Endothelial cell of umbilical vein (primary cell): ENCODE measurements at regions of chr2 and their contacts with region 1.

Region 1: DNA sequence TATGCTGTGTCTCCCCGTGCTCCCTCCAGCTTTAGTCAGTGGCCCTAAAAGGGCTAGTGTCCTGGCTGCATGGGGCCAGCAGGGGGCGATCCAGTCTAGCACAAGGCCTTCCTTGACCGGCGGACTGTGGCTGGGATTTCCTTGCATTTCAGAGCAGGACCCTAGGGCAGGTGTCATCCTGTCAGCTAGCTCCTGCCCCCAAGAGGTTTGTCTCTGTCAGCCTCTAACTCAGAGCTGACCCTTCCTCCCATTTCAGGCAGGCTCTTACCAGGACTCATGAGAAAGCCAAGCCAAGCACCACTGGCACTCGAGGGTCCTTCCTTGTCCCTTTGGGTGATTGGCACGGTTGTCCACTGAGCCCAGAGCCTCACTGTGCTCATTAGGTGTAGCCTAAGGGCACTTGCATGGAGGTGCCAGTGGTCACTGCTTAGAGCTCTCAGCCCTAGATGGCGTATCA is 140.3 kb downstream of the RPIA start:
- DNase-seq: peak; percentile 23
- H3K4me3 ChIP-seq: no peak overlapping the region
- H3K27ac ChIP-seq: no peak overlapping the region
- H3K4me1 ChIP-seq: peaks cover 22% of the 10 kb centered on the region
- H3K27me3 ChIP-seq: no peaks in the 10 kb centered on the region
- CTCF ChIP-seq: peak; percentile 56 to 78
- POLR2A ChIP-seq: no peak

Region 2: GRCh38 chr2:88144914-88145497 is 686.8 kb before region 1 on chr2:
- CTCF ChIA-PET with region 1: no interaction called
- POLR2A ChIA-PET with region 1: no interaction called
- dilution Hi-C with region 1: no loop called
- intact Hi-C with region 1: no loop called
- DNase-seq: no peak
- H3K4me3 ChIP-seq: no peak overlapping the region
- H3K27ac ChIP-seq: no peak overlapping the region
- H3K4me1 ChIP-seq: no peaks in the 10 kb centered on the region
- H3K27me3 ChIP-seq: no peaks in the 10 kb centered on the region
- CTCF ChIP-seq: no peak
- POLR2A ChIP-seq: no peak

Region 3: GRCh38 chr2:88691339-88692183 is 140.3 kb before region 1 on chr2 and contains the start of gene RPIA:
- CTCF ChIA-PET with region 1: no interaction called
- POLR2A ChIA-PET with region 1: no interaction called
- dilution Hi-C with region 1: no loop called
- intact Hi-C with region 1: loop called (anchors 5 kb)
- DNase-seq: peak; percentile 99
- H3K4me3 ChIP-seq: peak within 1 kb of the TSS; percentile 44 to 83 (median 73)
- H3K27ac ChIP-seq: peak within 1 kb of the TSS; percentile 59
- H3K4me1 ChIP-seq: peaks cover 13% of the 10 kb centered on the region
- H3K27me3 ChIP-seq: no peaks in the 10 kb centered on the region
- CTCF ChIP-seq: peak; percentile 71 to 76
- POLR2A ChIP-seq: peak; percentile 61
- total RNA-seq, gene RPIA: 29.8 and 30.3 TPM in 2 replicates

Region 4: GRCh38 chr2:88709181-88709641 is 122.6 kb before region 1 on chr2:
- CTCF ChIA-PET with region 1: no interaction called
- POLR2A ChIA-PET with region 1: no interaction called
- dilution Hi-C with region 1: no loop called
- intact Hi-C with region 1: no loop called
- DNase-seq: peak; percentile 65
- H3K4me3 ChIP-seq: no peak overlapping the region
- H3K27ac ChIP-seq: no peak overlapping the region
- H3K4me1 ChIP-seq: peaks cover 7% of the 10 kb centered on the region
- H3K27me3 ChIP-seq: no peaks in the 10 kb centered on the region
- CTCF ChIP-seq: no peak
- POLR2A ChIP-seq: no peak

Region 5: GRCh38 chr2:88753833-88754584 is 77.8 kb before region 1 on chr2:
- CTCF ChIA-PET with region 1: no interaction called
- POLR2A ChIA-PET with region 1: no interaction called
- dilution Hi-C with region 1: no loop called
- intact Hi-C with region 1: no loop called
- DNase-seq: peak; percentile 22
- H3K4me3 ChIP-seq: no peak overlapping the region
- H3K27ac ChIP-seq: no peak overlapping the region
- H3K4me1 ChIP-seq: no peaks in the 10 kb centered on the region
- H3K27me3 ChIP-seq: no peaks in the 10 kb centered on the region
- CTCF ChIP-seq: no peak
- POLR2A ChIP-seq: no peak

Region 6: DNA sequence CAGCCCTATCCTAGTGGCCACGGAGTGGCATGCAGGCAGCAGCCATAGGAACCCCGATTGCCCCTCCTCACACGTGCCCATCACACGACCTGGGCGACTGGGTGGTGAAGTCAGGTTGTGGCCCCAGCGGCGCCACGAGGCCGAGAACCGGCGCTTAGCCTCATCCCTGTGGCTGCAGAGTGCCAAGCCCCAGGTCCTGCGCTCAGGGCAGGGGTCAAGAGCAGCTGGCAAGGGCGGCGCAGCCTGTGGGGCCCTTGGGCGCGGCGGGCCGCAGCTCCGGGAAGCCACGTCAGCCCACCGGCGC is 67.0 kb before region 1 on chr2:
- CTCF ChIA-PET with region 1: no interaction called
- POLR2A ChIA-PET with region 1: no interaction called
- dilution Hi-C with region 1: no loop called
- intact Hi-C with region 1: loop called (anchors 5 kb)
- DNase-seq: no peak
- H3K4me3 ChIP-seq: no peak overlapping the region
- H3K27ac ChIP-seq: no peak overlapping the region
- H3K4me1 ChIP-seq: peaks cover 8% of the 10 kb centered on the region
- H3K27me3 ChIP-seq: peaks cover 2 to 11% of the 10 kb centered on the region in 2 experiments
- CTCF ChIP-seq: no peak
- POLR2A ChIP-seq: no peak

Region 7: DNA sequence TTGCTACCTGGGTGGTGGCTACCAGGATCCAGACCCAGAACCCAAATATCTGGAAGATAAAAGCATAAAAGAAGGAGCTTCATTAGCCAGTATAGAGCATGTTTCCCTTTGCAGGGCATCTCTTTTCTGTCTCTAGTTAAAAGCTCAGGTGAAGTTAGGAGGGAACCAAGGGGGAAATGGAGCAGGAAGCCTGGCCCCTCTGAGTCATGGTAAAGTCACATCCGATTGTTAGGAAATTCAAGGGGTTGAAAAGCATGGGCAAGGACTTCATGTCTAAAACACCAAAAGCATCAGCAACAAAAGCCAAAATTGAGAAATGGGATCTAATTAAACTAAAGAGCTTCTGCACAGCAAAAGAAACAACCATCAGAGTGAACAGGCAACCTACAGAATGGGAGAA is 13.4 kb before region 1 on chr2:
- CTCF ChIA-PET with region 1: interaction called, 9 read pairs
- POLR2A ChIA-PET with region 1: no interaction called
- dilution Hi-C with region 1: no loop called
- intact Hi-C with region 1: loop called (anchors 1 kb)
- DNase-seq: peak; percentile 65
- H3K4me3 ChIP-seq: no peak overlapping the region
- H3K27ac ChIP-seq: no peak overlapping the region
- H3K4me1 ChIP-seq: peaks cover 5% of the 10 kb centered on the region
- H3K27me3 ChIP-seq: no peaks in the 10 kb centered on the region
- CTCF ChIP-seq: no peak
- POLR2A ChIP-seq: no peak

Region 8: GRCh38 chr2:88874063-88874657 is 42.3 kb after region 1 on chr2:
- CTCF ChIA-PET with region 1: interaction called, 3 read pairs
- POLR2A ChIA-PET with region 1: no interaction called
- dilution Hi-C with region 1: no loop called
- intact Hi-C with region 1: loop called (anchors 5 kb)
- DNase-seq: peak; percentile 77
- H3K4me3 ChIP-seq: peak overlapping the region in 1 of 3 experiments; percentile 45
- H3K27ac ChIP-seq: no peak overlapping the region
- H3K4me1 ChIP-seq: no peaks in the 10 kb centered on the region
- H3K27me3 ChIP-seq: peaks cover 10 to 32% of the 10 kb centered on the region in 2 experiments
- CTCF ChIP-seq: peak; percentile 57 to 62
- POLR2A ChIP-seq: no peak